ENCODE measurements at regions of chr11 and their contacts with region 1.

Region 1: GRCh38 chr11:67382276-67383136 is 9.1 kb upstream of the CLCF1 start:
- DNase-seq: no peak
- H3K4me3 ChIP-seq: no peak overlapping the region
- H3K27ac ChIP-seq: no peak overlapping the region
- H3K4me1 ChIP-seq: peaks cover 3 to 35% (median 17%) of the 10 kb centered on the region in 4 donors
- H3K27me3 ChIP-seq: no peaks in the 10 kb centered on the region
- CTCF ChIP-seq: peak; percentile 95 to 100 (median 99)
- EP300 ChIP-seq: no peak
- POLR2A ChIP-seq: no peak

Region 2: DNA sequence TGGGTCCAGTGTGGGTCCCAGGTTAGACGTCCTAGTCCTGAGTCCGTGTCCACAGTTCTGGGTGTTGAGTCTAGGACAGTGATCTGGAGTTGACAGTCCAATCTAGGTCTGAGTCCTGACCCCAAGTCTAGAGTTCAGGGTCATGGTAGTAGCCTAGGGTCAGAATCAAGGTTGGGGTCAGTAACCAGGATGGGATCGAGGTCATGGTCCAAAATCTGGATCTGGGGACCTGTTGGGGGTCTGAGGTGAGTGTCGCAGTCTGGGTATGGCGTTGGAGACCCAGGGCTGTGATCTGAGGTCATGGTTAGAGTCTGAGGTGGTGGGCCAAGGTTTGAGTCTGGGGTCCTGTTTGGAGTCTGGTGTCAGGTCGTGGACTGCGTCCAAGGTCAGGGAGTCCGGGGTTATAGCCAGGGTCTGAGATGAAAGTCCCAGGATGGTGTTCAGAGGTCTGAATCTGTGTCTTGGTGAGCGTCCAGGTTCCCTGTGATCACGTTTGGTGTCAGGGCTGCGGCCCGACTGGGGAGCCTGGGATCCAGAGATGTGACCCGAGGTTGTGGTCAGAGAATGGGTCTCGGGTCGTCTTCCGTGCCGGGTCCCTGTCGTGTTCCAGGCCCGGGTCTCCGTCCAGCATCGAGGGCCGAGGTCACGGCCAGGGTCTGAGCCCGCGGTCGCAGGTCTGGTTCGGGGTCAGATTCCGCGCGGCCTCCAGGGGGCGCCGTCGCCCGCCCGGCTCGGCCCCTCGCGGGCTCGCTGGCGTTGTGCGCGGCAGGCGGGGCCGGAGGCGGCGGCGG is 116.7 kb before region 1 on chr11:
- intact Hi-C with region 1: loop called (anchors 5 kb)
- DNase-seq: no peak
- H3K4me3 ChIP-seq: peak overlapping the region; percentile 15 to 99 (median 48)
- H3K27ac ChIP-seq: peak overlapping the region; percentile 77 to 79 (median 78)
- H3K4me1 ChIP-seq: peaks cover 59 to 83% (median 72%) of the 10 kb centered on the region in 4 donors
- H3K27me3 ChIP-seq: no peaks in the 10 kb centered on the region
- CTCF ChIP-seq: peak; percentile 69 to 87 (median 76)
- EP300 ChIP-seq: no peak
- POLR2A ChIP-seq: no peak

Region 3: GRCh38 chr11:67345920-67346799 is 36.3 kb before region 1 on chr11:
- intact Hi-C with region 1: loop called (anchors 5 kb)
- DNase-seq: no peak
- H3K4me3 ChIP-seq: no peak overlapping the region
- H3K27ac ChIP-seq: no peak overlapping the region
- H3K4me1 ChIP-seq: peaks cover 5 to 18% (median 9%) of the 10 kb centered on the region in 4 donors
- H3K27me3 ChIP-seq: no peaks in the 10 kb centered on the region
- CTCF ChIP-seq: peak; percentile 16 to 52 (median 31)
- EP300 ChIP-seq: no peak
- POLR2A ChIP-seq: no peak

Region 4: GRCh38 chr11:67353317-67354074 is 29.0 kb before region 1 on chr11 and contains the start of gene POLD4:
- intact Hi-C with region 1: loop called (anchors 2 kb)
- DNase-seq: peak; percentile 99
- H3K4me3 ChIP-seq: peak within 1 kb of the TSS; percentile 72 to 84 (median 78)
- H3K27ac ChIP-seq: peak within 1 kb of the TSS; percentile 96 to 99 (median 98)
- H3K4me1 ChIP-seq: peaks cover 61 to 80% (median 75%) of the 10 kb centered on the region in 4 donors
- H3K27me3 ChIP-seq: no peaks in the 10 kb centered on the region
- CTCF ChIP-seq: no peak
- EP300 ChIP-seq: no peak
- POLR2A ChIP-seq: peak; percentile 78
- total RNA-seq, gene POLD4: 77.2 to 106 (median 83.1) TPM

Measured in esophagus muscularis mucosa (tissue), 4 donors.